ENCODE measurements at regions of chr14 and their contacts with region 1.

Region 1: DNA sequence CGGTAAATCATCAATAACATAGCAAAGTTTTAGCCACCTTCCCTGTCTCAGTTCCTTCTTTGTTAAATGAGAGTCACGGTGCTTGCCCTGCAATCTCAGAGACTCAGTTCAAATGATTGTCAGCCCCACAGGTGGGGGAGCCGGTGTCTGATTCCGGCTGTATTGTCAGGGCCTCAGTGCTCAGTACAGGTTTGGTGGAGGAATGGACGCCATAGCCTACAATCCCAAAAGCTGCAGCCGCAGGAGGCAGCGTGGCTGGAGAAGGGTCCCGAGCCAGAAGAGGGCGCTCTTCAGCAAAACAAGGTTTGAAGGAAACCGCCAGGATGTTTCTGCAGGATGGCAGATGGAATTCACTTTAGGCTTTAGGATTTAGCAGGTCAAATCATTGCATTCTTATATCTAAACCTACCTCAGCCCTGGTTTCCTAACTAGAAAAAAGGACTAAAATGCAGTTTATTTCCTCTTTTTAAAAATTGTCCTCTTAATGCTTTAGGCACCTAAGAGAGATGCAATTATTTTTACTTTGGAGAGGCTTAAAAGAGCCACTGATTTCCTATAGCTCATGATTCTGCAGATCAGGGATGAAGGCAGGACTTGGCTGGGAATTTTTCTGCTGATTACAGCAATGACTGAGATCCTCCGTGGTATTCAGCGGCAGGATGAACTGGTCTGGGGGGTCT is 29.2 kb downstream of the FOS start:
- DNase-seq: peak; percentile 87 to 90
- ATAC-seq: peak; percentile 57 to 72 (median 66)
- H3K4me3 ChIP-seq: no peak overlapping the region
- H3K27ac ChIP-seq: no peak overlapping the region
- H3K4me1 ChIP-seq: peaks cover 7 to 40% (median 24%) of the 10 kb centered on the region in 9 donors
- H3K27me3 ChIP-seq: no peaks in the 10 kb centered on the region
- CTCF ChIP-seq: peak; percentile 87 to 97 (median 94)

Region 2: DNA sequence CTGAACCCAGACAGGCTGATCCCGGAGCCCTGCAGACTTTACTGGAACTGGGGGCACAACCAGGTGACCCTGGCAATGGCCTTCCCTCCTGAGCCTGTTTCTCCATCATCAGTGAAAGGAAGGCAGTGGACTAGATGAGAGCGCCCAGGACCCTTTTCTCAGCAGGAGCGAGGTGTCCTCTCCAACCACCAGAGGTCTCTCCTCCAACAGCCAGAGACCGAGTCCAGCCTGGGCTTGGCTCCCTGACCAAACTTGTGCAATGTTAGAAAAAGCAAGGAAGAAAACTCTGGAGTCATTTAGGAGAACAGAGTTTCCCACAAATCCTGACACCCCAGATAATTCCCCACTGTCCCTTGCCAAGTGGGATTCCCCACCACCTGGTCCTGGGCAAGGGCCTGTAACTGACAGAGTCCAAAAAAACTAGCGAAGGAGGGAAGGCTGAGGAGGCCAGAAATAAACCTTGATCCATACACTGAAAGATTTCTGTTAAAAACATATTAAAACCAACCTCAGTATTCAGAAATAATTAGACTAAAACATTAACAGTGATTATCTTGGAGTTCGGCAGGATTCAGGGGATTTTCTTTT is 393.8 kb before region 1 on chr14:
- intact Hi-C with region 1: loop called in 1 of 10 experiments (anchors 10 kb)
- DNase-seq: peak; percentile 64 to 82
- ATAC-seq: peak; percentile 38 to 72 (median 64)
- H3K4me3 ChIP-seq: no peak overlapping the region
- H3K27ac ChIP-seq: peak overlapping the region in 8 of 10 donors; percentile 8 to 90 (median 56)
- H3K4me1 ChIP-seq: peaks cover 25 to 69% (median 49%) of the 10 kb centered on the region in 9 donors
- H3K27me3 ChIP-seq: no peaks in the 10 kb centered on the region
- CTCF ChIP-seq: peak; percentile 52 to 91 (median 81)

Region 3: DNA sequence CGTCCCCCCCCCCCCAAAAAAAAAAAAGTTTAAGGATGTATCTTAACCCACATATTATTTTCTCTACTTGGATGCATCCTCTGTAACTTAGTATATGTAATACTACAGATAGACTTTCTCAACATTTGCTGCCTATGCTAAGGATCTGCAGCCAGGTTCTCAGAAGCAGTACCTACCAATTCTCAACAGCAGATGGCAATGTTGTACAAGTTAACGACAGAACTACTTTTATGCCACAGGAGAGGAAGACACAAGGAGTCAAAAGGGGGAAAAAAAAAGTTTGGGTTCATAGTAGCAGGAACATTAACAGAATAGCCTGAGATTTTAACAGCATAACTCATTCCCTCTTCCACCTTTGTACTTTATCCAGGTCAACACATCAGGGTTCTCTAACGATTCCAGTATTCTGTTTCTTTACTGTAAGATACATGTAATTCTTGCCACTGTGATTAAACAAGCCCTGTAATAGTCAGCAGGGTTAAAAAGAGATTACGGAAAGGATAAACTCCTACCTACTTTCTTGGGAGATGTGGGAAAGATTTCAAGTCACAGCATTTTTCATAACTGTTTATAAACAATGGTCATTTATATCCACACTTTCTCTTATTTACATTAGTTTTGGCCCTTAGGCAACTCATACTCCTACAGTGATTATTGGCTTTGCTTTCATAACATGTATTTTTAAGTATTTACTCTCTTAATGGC is 175.3 kb before region 1 on chr14:
- intact Hi-C with region 1: loop called in 6 of 10 experiments (anchors 1 to 2 kb)
- DNase-seq: peak in 1 of 2 donors; percentile 73
- ATAC-seq: peak; percentile 50 to 83 (median 76)
- H3K4me3 ChIP-seq: no peak overlapping the region
- H3K27ac ChIP-seq: peak overlapping the region in 4 of 10 donors; percentile 6 to 67 (median 26)
- H3K4me1 ChIP-seq: peaks cover 0 to 22% (median 15%) of the 10 kb centered on the region in 9 donors
- H3K27me3 ChIP-seq: no peaks in the 10 kb centered on the region
- CTCF ChIP-seq: peak; percentile 58 to 82 (median 74)

Region 4: DNA sequence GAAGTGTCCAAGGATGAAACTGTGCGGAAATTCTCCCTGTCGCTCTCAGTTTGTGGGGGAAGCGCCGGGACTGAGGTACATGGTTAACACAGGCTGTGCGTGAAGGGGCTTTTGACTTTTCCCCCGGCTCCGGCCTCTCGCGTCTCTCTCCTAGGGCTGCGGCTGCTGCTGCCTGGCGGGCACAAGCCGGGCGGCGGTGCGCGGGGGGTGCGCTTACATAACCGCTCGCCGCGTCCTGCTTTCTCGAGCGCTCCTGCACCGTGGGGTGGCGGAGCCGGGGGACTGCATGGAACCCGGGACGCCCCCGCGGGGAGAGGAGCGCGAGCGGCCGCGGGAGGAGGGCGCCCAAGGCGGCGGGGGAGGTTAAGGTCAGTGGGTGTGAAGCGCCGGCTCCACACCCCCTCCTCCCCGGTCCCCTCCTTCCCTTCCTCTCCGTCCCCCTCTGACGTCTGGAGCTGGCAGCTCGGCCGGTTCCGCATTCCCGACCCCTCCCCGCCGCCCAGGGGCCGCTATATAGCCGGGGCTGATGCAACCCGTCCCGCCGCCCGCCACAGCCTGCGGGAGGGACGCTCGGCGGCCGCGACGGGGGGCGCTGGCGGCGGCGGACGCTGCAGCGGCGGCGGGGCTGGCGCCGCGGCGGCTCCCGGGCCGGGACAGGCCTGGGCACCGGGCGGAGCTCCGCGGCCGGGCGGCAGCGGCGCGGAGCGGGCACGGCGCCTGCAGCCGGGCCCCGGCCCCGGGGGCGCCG is 119.8 kb after region 1 on chr14 and contains the start of gene JDP2:
- intact Hi-C with region 1: loop called in 6 of 10 experiments (anchors 1 to 10 kb)
- DNase-seq: peak; percentile 96 to 97
- ATAC-seq: peak; percentile 91 to 95 (median 93)
- H3K4me3 ChIP-seq: peak within 1 kb of the TSS; percentile 69 to 90 (median 78)
- H3K27ac ChIP-seq: peak within 1 kb of the TSS; percentile 81 to 98 (median 94)
- H3K4me1 ChIP-seq: peaks cover 20 to 64% (median 43%) of the 10 kb centered on the region in 9 donors
- H3K27me3 ChIP-seq: no peaks in the 10 kb centered on the region
- CTCF ChIP-seq: peak in 5 of 9 donors; percentile 13 to 53 (median 35)
- total RNA-seq, gene JDP2: 12.3 to 28.0 (median 17.3) TPM

Region 5: DNA sequence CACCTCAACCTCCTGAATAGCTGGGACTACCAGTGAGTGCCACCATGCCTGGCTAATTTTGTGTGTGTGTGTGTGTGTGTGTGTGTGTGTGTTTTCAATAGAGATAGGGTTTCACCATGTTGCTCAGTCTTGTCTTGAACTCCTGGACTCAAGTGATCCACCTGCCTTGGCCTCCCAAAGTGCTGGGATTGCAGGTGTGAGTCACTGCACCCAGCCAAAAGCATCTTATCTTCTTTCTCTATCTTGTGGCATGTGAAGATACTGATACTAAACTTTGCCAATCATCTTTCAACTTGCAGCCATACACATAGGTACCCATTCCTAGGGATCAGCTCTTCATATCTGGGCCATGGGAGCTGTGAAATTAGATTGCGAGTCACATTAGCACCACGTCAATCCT is 247.9 kb after region 1 on chr14:
- intact Hi-C with region 1: loop called in 4 of 10 experiments (anchors 2 to 10 kb)
- DNase-seq: no peak
- ATAC-seq: no peak
- H3K4me3 ChIP-seq: no peak overlapping the region
- H3K27ac ChIP-seq: no peak overlapping the region
- H3K4me1 ChIP-seq: peaks cover 0 to 14% (median under 1%) of the 10 kb centered on the region in 9 donors
- H3K27me3 ChIP-seq: peaks cover 0 to 21% (median 0%) of the 10 kb centered on the region in 7 donors
- CTCF ChIP-seq: no peak